Calu3 (cell line): ENCODE measurements at regions of chrX and their contacts with region 1.

Region 1: DNA sequence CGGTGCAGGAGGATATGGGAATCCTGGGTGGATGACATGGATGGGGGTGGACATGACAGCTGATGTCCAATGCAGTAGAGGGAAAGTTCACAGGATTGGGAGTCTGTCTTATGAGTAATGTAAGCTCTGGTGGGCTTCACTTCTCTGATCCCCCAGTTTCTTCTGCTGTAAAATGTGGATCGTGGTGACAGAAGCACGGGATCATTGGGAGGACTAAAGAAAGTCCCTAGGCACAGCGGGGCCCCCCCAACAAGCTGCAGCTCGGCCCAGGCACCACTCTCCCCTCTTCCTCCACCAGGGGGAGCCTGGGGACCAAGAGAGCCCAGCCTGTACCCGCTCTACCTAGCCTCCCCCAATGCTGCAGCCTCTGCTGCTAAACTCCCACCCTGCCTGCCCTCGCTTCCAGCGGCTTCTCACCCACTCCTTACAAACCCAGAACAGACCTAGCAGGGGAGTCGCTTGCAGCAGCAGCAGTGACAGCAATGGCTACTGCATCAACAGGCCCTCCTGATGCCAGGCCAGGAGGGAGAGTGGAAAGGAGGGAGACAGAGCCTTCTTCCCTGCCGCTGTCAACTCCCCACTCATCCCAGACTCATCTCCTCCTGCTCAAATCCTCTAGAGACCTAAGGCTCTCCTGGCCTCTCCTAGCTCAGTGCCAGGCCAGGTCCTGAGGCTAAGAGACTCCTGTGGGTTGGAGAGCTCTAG is 36.1 kb upstream of the IQSEC2 start:
- DNase-seq: peak; percentile 81
- H3K4me3 Mint-ChIP-seq: no peak overlapping the region
- H3K27ac Mint-ChIP-seq: no peak overlapping the region
- H3K4me1 Mint-ChIP-seq: peaks cover 10% of the 10 kb centered on the region
- H3K27me3 Mint-ChIP-seq: peaks cover 73% of the 10 kb centered on the region
- CTCF ChIP-seq: peak; percentile 82

Region 2: GRCh38 chrX:52595841-52596240 is 721.7 kb before region 1 on chrX:
- CTCF ChIA-PET with region 1: no interaction called
- intact Hi-C with region 1: no loop called
- DNase-seq: no peak
- H3K4me3 Mint-ChIP-seq: no peak overlapping the region
- H3K27ac Mint-ChIP-seq: no peak overlapping the region
- H3K4me1 Mint-ChIP-seq: no peaks in the 10 kb centered on the region
- H3K27me3 Mint-ChIP-seq: peaks cover 53% of the 10 kb centered on the region
- CTCF ChIP-seq: no peak

Region 3: DNA sequence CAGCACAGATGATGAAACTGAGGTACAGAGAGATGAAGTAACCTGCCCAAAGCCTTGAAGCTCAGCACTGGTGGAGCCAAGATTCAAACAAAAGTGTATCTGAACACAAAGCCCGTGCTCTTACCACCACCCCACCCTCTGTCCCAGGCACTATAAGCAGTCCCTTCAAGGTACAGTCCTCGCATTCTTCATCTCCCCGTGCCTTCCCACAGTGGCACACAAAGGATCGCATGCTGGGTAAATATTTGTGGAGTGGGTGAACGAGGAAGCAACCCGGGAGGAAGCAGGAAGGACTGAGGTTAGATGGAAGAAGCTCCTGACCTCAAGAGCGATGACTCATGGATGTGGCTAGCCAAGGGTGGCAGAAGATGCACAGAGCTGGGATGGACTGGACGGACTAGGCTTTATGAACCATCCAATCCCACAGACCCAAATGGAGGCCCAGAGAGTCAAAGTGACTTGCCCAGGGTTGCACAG is 54.6 kb before region 1 on chrX:
- CTCF ChIA-PET with region 1: no interaction called
- intact Hi-C with region 1: no loop called
- DNase-seq: peak; percentile 50
- H3K4me3 Mint-ChIP-seq: no peak overlapping the region
- H3K27ac Mint-ChIP-seq: peak overlapping the region; percentile 25
- H3K4me1 Mint-ChIP-seq: peaks cover 47% of the 10 kb centered on the region
- H3K27me3 Mint-ChIP-seq: no peaks in the 10 kb centered on the region
- CTCF ChIP-seq: no peak

Region 4: GRCh38 chrX:53284684-53285447 is 32.7 kb before region 1 on chrX:
- CTCF ChIA-PET with region 1: interaction called, 3 read pairs
- intact Hi-C with region 1: loop called (anchors 5 kb)
- DNase-seq: peak; percentile 70
- H3K4me3 Mint-ChIP-seq: no peak overlapping the region
- H3K27ac Mint-ChIP-seq: no peak overlapping the region
- H3K4me1 Mint-ChIP-seq: peaks cover 22% of the 10 kb centered on the region
- H3K27me3 Mint-ChIP-seq: peaks cover 13% of the 10 kb centered on the region
- CTCF ChIP-seq: peak; percentile 63

Region 5: GRCh38 chrX:53330331-53330730 is 12.8 kb after region 1 on chrX:
- CTCF ChIA-PET with region 1: interaction called, 9 read pairs
- intact Hi-C with region 1: loop called (anchors 2 kb)
- DNase-seq: no peak
- H3K4me3 Mint-ChIP-seq: no peak overlapping the region
- H3K27ac Mint-ChIP-seq: no peak overlapping the region
- H3K4me1 Mint-ChIP-seq: no peaks in the 10 kb centered on the region
- H3K27me3 Mint-ChIP-seq: peaks cover 88% of the 10 kb centered on the region
- CTCF ChIP-seq: no peak

Region 6: GRCh38 chrX:53445977-53446376 is 128.5 kb after region 1 on chrX:
- CTCF ChIA-PET with region 1: interaction called, 9 read pairs
- intact Hi-C with region 1: loop called (anchors 2 kb)
- DNase-seq: peak; percentile 52
- H3K4me3 Mint-ChIP-seq: no peak overlapping the region
- H3K27ac Mint-ChIP-seq: no peak overlapping the region
- H3K4me1 Mint-ChIP-seq: no peaks in the 10 kb centered on the region
- H3K27me3 Mint-ChIP-seq: peaks cover 11% of the 10 kb centered on the region
- CTCF ChIP-seq: no peak

Region 7: GRCh38 chrX:53481816-53482465 is 164.4 kb after region 1 on chrX:
- CTCF ChIA-PET with region 1: interaction called, 25 read pairs
- intact Hi-C with region 1: loop called (anchors 2 kb)
- DNase-seq: peak; percentile 68
- H3K4me3 Mint-ChIP-seq: no peak overlapping the region
- H3K27ac Mint-ChIP-seq: no peak overlapping the region
- H3K4me1 Mint-ChIP-seq: peaks cover 11% of the 10 kb centered on the region
- H3K27me3 Mint-ChIP-seq: peaks cover 31% of the 10 kb centered on the region
- CTCF ChIP-seq: no peak